A673 (cell line): ENCODE measurements at regions of chr17 and their contacts with region 1.

Region 1: DNA sequence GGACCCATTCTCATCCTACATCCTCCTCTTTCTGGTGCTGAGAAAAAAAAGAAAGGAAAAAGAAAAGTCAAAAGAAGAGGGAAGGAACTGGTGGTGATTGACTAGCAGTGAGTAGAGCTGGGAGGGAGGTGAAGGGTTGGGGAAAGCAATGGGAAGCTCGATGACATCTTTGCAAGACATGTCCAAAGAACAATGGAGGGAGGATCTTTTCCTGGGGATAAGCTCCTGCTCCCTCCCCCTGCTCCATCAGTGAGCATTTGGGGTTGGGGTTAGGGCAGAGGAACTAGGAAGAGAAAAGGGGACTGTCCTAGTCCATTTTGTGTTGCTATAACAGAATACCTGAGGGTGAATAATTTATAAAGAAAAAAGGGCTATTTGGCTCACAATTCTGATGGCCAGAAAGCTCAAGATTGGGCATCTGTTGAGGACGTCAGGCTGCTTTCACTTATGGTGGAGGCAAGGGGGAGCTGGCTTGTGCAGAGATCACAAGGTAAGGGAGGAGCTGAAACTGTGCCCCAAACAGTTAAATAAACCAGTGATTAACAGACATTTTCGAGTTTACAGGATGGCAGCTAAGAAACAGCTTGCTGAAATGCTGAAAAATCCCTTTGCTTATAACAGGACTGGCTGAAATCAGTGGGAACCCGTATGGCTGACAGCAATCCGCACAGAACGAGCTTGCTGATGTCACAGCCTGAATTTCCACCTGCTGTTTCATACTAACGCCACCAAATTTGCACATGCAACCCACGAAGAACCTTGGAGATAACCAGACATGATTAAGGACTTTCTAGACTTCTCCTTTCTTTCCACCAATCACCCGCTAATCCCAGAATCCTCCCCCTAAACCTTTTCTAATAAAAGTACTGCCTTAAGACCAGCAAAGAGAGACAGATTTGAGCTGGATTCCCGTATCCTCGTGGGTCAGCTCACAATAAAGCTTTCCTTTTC is 1.6 kb upstream of the ODF4 start:
- DNase-seq: peak; percentile 18
- H3K4me3 ChIP-seq: no peak overlapping the region
- H3K27ac ChIP-seq: no peak overlapping the region
- H3K4me1 ChIP-seq: peaks cover 4% of the 10 kb centered on the region
- H3K27me3 ChIP-seq: no peaks in the 10 kb centered on the region
- CTCF ChIP-seq: no peak

Region 2: GRCh38 chr17:8326511-8327302 is 11.4 kb before region 1 on chr17:
- CTCF ChIA-PET with region 1: interaction called, 6 read pairs
- POLR2A ChIA-PET with region 1: interaction called, 18 read pairs
- intact Hi-C with region 1: no loop called
- DNase-seq: no peak
- H3K4me3 ChIP-seq: peak overlapping the region; percentile 39
- H3K27ac ChIP-seq: no peak overlapping the region
- H3K4me1 ChIP-seq: no peaks in the 10 kb centered on the region
- H3K27me3 ChIP-seq: no peaks in the 10 kb centered on the region
- CTCF ChIP-seq: no peak

Region 3: GRCh38 chr17:8354236-8354635 is 16.2 kb after region 1 on chr17:
- CTCF ChIA-PET with region 1: no interaction called
- POLR2A ChIA-PET with region 1: interaction called, 17 read pairs
- intact Hi-C with region 1: no loop called
- DNase-seq: no peak
- H3K4me3 ChIP-seq: no peak overlapping the region
- H3K27ac ChIP-seq: no peak overlapping the region
- H3K4me1 ChIP-seq: peaks cover 12% of the 10 kb centered on the region
- H3K27me3 ChIP-seq: no peaks in the 10 kb centered on the region
- CTCF ChIP-seq: no peak